ENCODE measurements at regions of chr10 and their contacts with region 1.

Region 1: DNA sequence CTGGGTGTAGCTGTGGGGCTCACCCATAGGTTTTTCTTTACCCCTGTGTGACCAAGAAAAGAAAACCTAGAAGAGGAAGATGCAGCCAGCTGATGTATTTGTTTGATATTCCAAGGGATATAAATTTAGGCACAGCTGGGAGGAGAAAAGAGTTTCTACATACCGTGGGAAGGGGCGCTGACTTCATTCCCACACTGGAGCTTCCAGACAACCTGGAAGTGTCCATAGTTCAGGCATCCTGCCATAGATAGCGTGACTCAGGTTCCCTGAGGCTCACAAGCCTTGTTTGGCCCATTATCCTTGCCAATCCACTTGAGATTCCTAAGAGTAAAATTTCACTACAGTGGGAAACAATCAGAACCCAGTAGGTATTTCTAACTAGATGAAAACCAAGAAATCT is 371.7 kb upstream of the NRP1 start:
- DNase-seq: peak in 1 of 2 donors; percentile 23
- ATAC-seq: peak in 3 of 8 donors; percentile 68 to 83 (median 77)
- H3K4me3 ChIP-seq: no peak overlapping the region
- H3K27ac ChIP-seq: peak overlapping the region in 4 of 10 donors; percentile 19 to 48 (median 31)
- H3K4me1 ChIP-seq: peaks cover 0 to 33% (median 21%) of the 10 kb centered on the region in 9 donors
- H3K27me3 ChIP-seq: no peaks in the 10 kb centered on the region
- CTCF ChIP-seq: no peak

Region 2: DNA sequence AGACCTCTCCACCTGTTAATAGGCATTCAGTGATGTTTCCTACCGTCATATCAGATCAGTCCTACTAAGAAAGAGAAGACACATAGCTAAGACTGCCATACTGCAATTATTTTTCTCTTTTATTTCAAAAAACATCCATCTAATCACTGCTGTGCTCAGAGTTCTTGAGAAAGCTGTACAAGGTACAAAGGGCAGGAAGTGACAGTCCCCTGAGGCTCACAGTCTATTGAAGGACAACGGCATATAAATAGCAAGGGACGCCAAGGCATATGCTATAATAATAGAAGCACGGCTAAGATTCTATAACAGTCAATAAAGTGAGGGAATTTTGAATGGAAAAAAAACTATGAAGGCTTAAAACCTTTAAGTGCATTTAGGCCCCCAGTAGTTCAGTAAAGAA is 43.6 kb after region 1 on chr10:
- intact Hi-C with region 1: loop called in 1 of 10 experiments (anchors 5 kb)
- DNase-seq: peak in 1 of 2 donors; percentile 68
- ATAC-seq: peak; percentile 67 to 96 (median 93)
- H3K4me3 ChIP-seq: no peak overlapping the region
- H3K27ac ChIP-seq: peak overlapping the region in 5 of 10 donors; percentile 32 to 59 (median 51)
- H3K4me1 ChIP-seq: peaks cover 9 to 26% (median 21%) of the 10 kb centered on the region in 9 donors
- H3K27me3 ChIP-seq: no peaks in the 10 kb centered on the region
- CTCF ChIP-seq: no peak